ENCODE measurements at regions of chr1 and their contacts with region 1.

Region 1: DNA sequence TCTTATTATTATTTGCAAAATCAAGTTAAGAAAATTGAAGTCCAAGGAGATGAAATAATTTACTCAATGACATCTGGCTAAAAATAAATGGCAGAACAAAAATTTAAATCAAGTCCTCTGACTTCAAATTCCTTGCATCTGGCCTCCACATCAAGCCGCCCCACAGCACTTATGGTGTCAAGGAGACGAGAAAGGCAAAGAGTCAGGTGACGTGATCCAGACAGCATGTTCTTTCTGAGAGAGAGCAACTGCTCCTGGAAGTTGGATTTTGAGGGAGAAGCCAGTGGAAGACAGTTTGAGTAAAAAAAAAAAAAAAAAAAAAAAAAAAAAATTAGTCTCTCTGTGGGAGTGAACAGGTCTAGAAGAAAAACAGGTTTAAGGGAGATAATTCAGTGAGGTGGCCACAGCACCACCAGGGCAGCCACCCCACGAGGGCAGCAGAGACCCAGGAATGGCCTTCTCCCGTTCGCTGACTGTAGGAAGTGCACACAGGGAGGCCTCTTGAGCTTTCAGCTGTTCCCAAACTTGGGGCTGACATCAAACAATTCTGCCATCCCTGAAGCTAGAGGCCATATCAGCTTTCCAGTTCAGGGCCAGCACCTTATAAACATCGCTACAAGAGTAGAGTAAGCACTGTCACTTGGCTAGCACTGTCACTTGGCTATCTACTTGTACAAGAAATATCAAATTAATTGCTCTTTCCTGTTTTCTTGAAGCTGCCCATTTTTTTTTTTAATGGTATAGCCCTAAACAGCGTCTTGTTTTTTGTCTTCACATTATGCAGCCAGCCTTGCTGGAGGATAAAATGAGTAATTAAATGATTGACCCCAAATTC is 7.8 kb downstream of the C1orf162 start:
- DNase-seq: peak; percentile 29
- H3K4me3 ChIP-seq: no peak overlapping the region
- H3K27ac ChIP-seq: no peak overlapping the region
- H3K27me3 ChIP-seq: no peaks in the 10 kb centered on the region
- CTCF ChIP-seq: peak; percentile 87

Region 2: GRCh38 chr1:111417755-111418154 is 63.8 kb before region 1 on chr1:
- CTCF ChIA-PET with region 1: no interaction called
- POLR2A ChIA-PET with region 1: no interaction called
- DNase-seq: peak; percentile 50
- H3K4me3 ChIP-seq: no peak overlapping the region
- H3K27ac ChIP-seq: no peak overlapping the region
- H3K27me3 ChIP-seq: peaks cover 6% of the 10 kb centered on the region
- CTCF ChIP-seq: no peak

Region 3: GRCh38 chr1:111455642-111456031 is 26.0 kb before region 1 on chr1:
- CTCF ChIA-PET with region 1: no interaction called
- POLR2A ChIA-PET with region 1: no interaction called
- DNase-seq: no peak
- H3K4me3 ChIP-seq: no peak overlapping the region
- H3K27ac ChIP-seq: no peak overlapping the region
- H3K27me3 ChIP-seq: no peaks in the 10 kb centered on the region
- CTCF ChIP-seq: no peak

Region 4: DNA sequence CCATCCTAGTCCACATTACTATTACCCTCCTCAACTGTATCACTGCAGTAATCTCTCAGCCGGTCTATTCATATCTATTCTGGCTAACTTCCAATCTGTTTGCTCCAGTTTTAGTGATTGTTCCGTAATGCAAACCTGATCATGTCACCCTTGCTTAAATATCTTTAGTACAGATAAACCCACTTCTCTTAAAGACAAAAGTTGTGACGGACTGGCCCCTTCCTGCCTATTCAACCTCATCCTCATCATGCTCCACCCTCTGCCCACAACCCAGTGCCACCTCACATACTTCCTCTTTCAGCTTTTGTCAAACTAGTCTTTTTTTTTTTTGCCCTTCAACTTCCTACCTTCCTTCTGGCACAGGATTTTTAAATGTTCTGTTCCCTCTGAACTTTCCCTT is 10.6 kb before region 1 on chr1:
- CTCF ChIA-PET with region 1: interaction called, 13 read pairs
- POLR2A ChIA-PET with region 1: no interaction called
- DNase-seq: no peak
- H3K4me3 ChIP-seq: no peak overlapping the region
- H3K27ac ChIP-seq: no peak overlapping the region
- H3K27me3 ChIP-seq: no peaks in the 10 kb centered on the region
- CTCF ChIP-seq: no peak

Region 5: DNA sequence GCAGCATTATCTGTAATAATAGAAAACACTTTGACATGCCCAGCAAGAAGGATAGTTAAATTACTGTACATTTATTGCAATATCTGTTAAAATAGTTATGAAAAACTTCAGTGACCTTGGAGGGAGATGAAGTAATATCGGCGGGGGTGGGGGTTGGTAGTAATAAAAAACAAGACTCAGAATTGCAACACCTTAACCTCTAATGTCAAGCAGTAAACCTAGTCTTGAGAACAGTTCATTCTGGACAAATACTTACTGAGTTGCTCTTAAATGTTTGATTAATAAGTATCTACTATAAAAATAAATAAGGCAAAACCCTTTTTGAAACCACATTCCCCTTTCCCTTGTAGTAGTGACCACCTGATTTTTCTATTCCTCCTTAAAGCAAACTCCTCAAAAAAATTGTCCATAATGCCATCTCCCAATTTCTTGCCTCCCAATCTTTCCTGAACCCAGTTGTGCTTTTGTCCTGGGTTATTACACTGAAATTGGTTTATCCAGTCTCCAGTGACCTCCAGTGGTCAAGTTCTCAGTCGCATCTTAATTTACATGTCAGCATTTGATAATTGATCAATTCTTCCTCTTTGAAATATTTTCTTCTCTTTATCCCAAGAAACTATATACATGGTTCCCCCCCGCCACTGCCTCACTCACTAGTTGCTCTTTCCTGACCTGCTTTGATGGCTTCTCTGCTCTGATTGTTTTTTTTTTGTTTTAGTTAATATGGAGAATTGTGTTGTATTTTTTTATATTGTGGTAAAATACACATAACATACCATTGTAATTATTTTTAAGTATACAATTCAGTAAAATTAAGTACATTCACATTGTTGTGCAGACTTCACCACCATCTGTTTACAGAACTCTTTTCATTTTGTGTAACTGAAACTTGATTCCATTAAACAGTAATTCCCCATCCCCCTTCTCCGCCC is 174.7 kb after region 1 on chr1:
- CTCF ChIA-PET with region 1: interaction called, 16 read pairs
- POLR2A ChIA-PET with region 1: no interaction called
- DNase-seq: peak; percentile 15
- H3K4me3 ChIP-seq: no peak overlapping the region
- H3K27ac ChIP-seq: no peak overlapping the region
- H3K27me3 ChIP-seq: no peaks in the 10 kb centered on the region
- CTCF ChIP-seq: peak; percentile 64

Region 6: DNA sequence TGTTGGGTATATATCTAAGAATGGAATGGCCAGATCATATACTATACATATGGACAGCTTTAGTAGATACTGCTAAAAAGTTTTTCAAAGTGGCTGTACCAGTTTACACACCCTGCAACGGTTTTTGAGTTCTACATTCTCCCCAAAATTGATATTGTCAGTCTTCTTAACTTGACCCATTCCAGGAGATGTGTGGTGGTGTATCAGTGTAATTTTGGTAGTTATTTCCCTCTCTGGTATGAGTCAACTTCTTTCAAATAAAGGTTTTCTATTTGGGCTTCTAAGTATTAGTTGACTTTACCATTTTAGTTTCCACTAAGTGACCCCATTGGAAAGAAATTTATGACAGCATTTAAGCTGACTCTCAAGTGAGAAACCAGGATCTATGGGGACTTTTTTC is 228.4 kb after region 1 on chr1:
- CTCF ChIA-PET with region 1: interaction called, 72 read pairs
- POLR2A ChIA-PET with region 1: interaction called, 3 read pairs
- DNase-seq: no peak
- H3K4me3 ChIP-seq: no peak overlapping the region
- H3K27ac ChIP-seq: no peak overlapping the region
- H3K27me3 ChIP-seq: no peaks in the 10 kb centered on the region
- CTCF ChIP-seq: no peak

Region 7: GRCh38 chr1:111755331-111756123 is 273.9 kb after region 1 on chr1 and contains the start of gene DDX20:
- CTCF ChIA-PET with region 1: interaction called, 26 read pairs
- POLR2A ChIA-PET with region 1: no interaction called
- DNase-seq: peak; percentile 95
- H3K4me3 ChIP-seq: peak within 1 kb of the TSS; percentile 92
- H3K27ac ChIP-seq: peak within 1 kb of the TSS; percentile 96
- H3K27me3 ChIP-seq: no peaks in the 10 kb centered on the region
- CTCF ChIP-seq: peak; percentile 84
- polyA plus RNA-seq, gene DDX20: 8.2 and 12.3 TPM in 2 replicates

Region 8: GRCh38 chr1:111769517-111770146 is 288.0 kb after region 1 on chr1:
- CTCF ChIA-PET with region 1: interaction called, 133 read pairs
- POLR2A ChIA-PET with region 1: no interaction called
- DNase-seq: peak; percentile 41
- H3K4me3 ChIP-seq: no peak overlapping the region
- H3K27ac ChIP-seq: no peak overlapping the region
- H3K27me3 ChIP-seq: no peaks in the 10 kb centered on the region
- CTCF ChIP-seq: peak; percentile 80

Measured in AG04450 (cell line).